Right ventricle myocardium inferior (tissue), 1 donor: ENCODE measurements at regions of chr13 and their contacts with region 1.

Region 1: GRCh38 chr13:41263261-41264027 is at the start of gene MTRF1:
- DNase-seq: peak; percentile 88
- ATAC-seq: peak; percentile 95
- total RNA-seq, gene MTRF1: 15.0 TPM

Region 2: DNA sequence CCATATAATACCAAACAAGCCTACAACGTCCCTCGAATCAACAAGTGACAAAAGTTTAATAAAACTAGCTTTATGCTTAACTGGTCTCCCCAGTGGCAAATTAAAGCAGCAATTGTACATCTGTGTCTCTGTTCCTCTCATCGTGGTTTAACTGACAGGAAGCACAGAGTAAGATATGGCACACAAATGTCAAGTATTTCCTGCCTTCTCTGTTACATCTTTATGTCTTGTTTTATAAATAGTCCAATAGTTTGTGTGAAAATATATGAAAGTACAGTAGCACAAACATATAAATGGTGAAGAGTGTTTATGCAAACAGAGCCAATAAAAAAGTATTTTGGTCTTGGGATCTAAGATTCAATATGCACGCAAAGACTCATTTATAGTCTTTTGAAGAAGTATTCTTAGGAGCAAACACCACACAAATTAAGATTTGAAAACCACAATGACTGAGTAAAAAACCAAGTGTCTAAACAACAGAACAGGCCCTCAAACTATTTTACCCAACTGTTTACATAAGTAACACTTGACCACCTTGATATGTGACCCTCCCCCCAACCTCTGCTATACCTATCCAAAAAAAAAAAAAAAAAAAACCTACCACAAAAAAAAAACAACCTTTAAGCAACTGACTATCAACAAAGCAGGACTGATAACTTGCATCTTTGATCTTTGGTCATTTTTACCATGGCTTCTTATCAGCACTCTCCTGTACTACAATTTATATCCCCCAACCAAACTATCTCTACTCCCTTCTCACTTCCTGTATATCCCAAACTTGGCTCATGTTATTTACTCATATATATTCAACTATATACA is 258.4 kb before region 1 on chr13:
- intact Hi-C with region 1: no loop called
- DNase-seq: no peak
- ATAC-seq: no peak

Region 3: GRCh38 chr13:41310963-41311606 is 47.6 kb after region 1 on chr13 and contains the start of gene NAA16:
- intact Hi-C with region 1: loop called (anchors 5 kb)
- DNase-seq: peak; percentile 96
- ATAC-seq: peak; percentile 95
- total RNA-seq, gene NAA16: 7.4 TPM